ENCODE measurements at regions of chr7 and their contacts with region 1.

Region 1: DNA sequence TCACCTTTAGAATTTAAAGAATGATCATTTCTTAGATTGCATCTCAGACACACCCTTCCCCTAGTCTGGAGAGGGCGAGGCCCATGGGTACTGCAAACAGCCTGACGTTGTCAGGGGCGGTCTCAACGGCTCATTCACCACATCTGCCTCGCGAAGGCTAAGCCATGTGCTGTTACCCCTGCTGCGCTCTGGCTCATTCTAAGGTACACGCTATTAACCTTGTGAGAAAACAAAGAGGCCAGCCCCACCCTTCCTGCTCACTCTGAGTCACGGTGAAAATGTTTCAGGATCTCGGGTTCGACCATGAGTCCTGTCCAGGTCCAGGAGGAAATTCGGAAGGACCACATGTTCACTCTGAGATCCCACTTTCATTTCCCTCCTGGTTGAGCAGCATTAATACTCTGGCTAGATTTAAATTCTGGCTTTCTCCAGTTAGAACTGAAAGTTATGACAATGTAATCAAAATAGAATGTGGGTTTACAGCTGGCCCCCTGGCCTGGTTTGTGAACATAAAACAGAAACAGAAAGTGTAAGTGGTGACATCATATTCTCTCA is 55.2 kb downstream of the EGFR start:
- DNase-seq: peak; percentile 50
- ATAC-seq: peak; percentile 77
- H3K4me3 Mint-ChIP-seq: no peak overlapping the region
- H3K27ac Mint-ChIP-seq: peak overlapping the region; percentile 33
- H3K4me1 Mint-ChIP-seq: peaks cover 18% of the 10 kb centered on the region
- H3K27me3 Mint-ChIP-seq: peaks cover 8% of the 10 kb centered on the region

Region 2: GRCh38 chr7:54995631-54996340 is 78.2 kb before region 1 on chr7:
- CTCF ChIA-PET with region 1: no interaction called
- POLR2A ChIA-PET with region 1: no interaction called
- intact Hi-C with region 1: loop called (anchors 1 to 2 kb)
- DNase-seq: peak; percentile 58
- ATAC-seq: peak; percentile 90
- H3K4me3 Mint-ChIP-seq: no peak overlapping the region
- H3K27ac Mint-ChIP-seq: peak overlapping the region; percentile 69
- H3K4me1 Mint-ChIP-seq: peaks cover 34% of the 10 kb centered on the region
- H3K27me3 Mint-ChIP-seq: peaks cover 22% of the 10 kb centered on the region

Region 3: GRCh38 chr7:55063633-55064032 is 10.4 kb before region 1 on chr7:
- CTCF ChIA-PET with region 1: no interaction called
- POLR2A ChIA-PET with region 1: no interaction called
- intact Hi-C with region 1: no loop called
- DNase-seq: no peak
- ATAC-seq: no peak
- H3K4me3 Mint-ChIP-seq: no peak overlapping the region
- H3K27ac Mint-ChIP-seq: no peak overlapping the region
- H3K4me1 Mint-ChIP-seq: peaks cover 5% of the 10 kb centered on the region
- H3K27me3 Mint-ChIP-seq: peaks cover 39% of the 10 kb centered on the region